ENCODE measurements at regions of chr12 and their contacts with region 1.

Region 1: GRCh38 chr12:42129595-42130204 is 15.0 kb downstream of the GXYLT1 start:
- DNase-seq: no peak
- ATAC-seq: no peak
- H3K4me3 Mint-ChIP-seq: no peak overlapping the region
- H3K27ac Mint-ChIP-seq: no peak overlapping the region
- H3K4me1 Mint-ChIP-seq: peaks cover 53% of the 10 kb centered on the region
- H3K27me3 Mint-ChIP-seq: no peaks in the 10 kb centered on the region

Region 2: GRCh38 chr12:42023733-42024494 is 105.8 kb before region 1 on chr12:
- CTCF ChIA-PET with region 1: no interaction called
- POLR2A ChIA-PET with region 1: no interaction called
- intact Hi-C with region 1: no loop called
- DNase-seq: peak; percentile 84
- ATAC-seq: peak; percentile 86
- H3K4me3 Mint-ChIP-seq: peak overlapping the region; percentile 39
- H3K27ac Mint-ChIP-seq: no peak overlapping the region
- H3K4me1 Mint-ChIP-seq: peaks cover 8% of the 10 kb centered on the region
- H3K27me3 Mint-ChIP-seq: peaks cover 17% of the 10 kb centered on the region

Region 3: GRCh38 chr12:42332301-42333285 is 202.9 kb after region 1 on chr12:
- CTCF ChIA-PET with region 1: interaction called, 5 read pairs
- POLR2A ChIA-PET with region 1: interaction called, 5 read pairs
- intact Hi-C with region 1: loop called (anchors 1 kb)
- DNase-seq: peak; percentile 32
- ATAC-seq: peak; percentile 44
- H3K4me3 Mint-ChIP-seq: no peak overlapping the region
- H3K27ac Mint-ChIP-seq: no peak overlapping the region
- H3K4me1 Mint-ChIP-seq: peaks cover 63% of the 10 kb centered on the region
- H3K27me3 Mint-ChIP-seq: no peaks in the 10 kb centered on the region

Measured in activated CD4-positive, alpha-beta T cell treated with anti-CD3 and anti-CD28 coated beads for 36 hours (primary cell).